Mammary epithelial cell (primary cell): ENCODE measurements at regions of chr19 and their contacts with region 1.

Region 1: DNA sequence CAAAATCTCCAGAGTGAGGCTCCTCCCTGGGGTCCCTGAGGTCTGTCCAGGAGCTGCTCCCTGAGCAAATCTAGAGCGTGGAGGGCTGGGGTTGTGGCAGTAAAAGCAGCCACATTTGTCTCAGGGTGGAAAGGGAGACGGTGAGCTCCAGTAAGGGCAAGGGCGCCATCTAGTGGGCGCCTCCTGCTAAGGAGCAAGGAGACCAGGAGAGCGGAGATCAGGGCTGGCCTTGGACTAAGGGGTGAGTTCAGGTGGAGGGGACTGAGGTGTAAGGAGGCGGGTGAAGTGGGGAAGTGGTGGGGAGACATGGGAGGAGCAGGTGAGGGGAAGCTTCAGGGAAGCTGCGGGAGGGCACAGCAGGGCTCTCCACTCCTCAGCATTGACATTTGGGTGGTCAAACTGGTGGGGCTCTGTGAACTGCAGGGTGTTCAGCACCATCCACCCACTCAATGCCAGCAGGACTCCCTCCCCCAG is 5.3 kb upstream of the CEACAM21 start:
- DNase-seq: peak; percentile 52
- H3K4me3 ChIP-seq: no peak overlapping the region
- H3K27ac ChIP-seq: no peak overlapping the region
- H3K4me1 ChIP-seq: no peaks in the 10 kb centered on the region
- H3K27me3 ChIP-seq: peaks cover 9% of the 10 kb centered on the region
- CTCF ChIP-seq: peak; percentile 82 to 94

Region 2: GRCh38 chr19:41439441-41440222 is 131.0 kb before region 1 on chr19 and contains the start of gene DMAC2:
- CTCF ChIA-PET with region 1: interaction called, 4 read pairs
- dilution Hi-C with region 1: no loop called
- in situ Hi-C with region 1: loop called in 1 of 2 experiments (anchors 10 kb)
- intact Hi-C with region 1: no loop called
- DNase-seq: peak; percentile 97
- H3K4me3 ChIP-seq: peak within 1 kb of the TSS; percentile 68 to 82 (median 76)
- H3K27ac ChIP-seq: peak within 1 kb of the TSS; percentile 79
- H3K4me1 ChIP-seq: peaks cover 9% of the 10 kb centered on the region
- H3K27me3 ChIP-seq: no peaks in the 10 kb centered on the region
- CTCF ChIP-seq: peak; percentile 47 to 57
- total RNA-seq, gene DMAC2: 39.2 to 50.6 TPM

Region 3: DNA sequence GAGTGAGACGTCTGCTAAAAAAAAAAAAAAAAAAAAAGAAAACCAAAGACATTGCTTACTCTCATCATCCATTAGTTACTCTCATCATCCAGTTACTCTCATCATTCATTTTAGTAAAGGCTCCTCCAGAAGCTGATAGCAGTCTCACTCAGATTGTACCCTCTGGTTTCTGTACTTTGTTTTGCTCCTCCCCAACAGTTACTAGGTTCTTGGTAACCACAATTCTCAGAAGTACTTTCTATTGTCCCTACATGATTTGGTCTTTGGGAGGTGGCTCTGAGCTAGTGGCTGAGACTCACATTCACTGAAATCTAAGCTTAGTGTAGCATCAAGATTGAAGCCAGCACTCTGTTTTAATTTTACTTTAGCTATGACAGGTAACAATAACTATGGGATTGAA is 113.4 kb before region 1 on chr19:
- CTCF ChIA-PET with region 1: no interaction called
- dilution Hi-C with region 1: no loop called
- in situ Hi-C with region 1: loop called in 1 of 2 experiments (anchors 10 kb)
- intact Hi-C with region 1: no loop called
- DNase-seq: no peak
- H3K4me3 ChIP-seq: no peak overlapping the region
- H3K27ac ChIP-seq: no peak overlapping the region
- H3K4me1 ChIP-seq: no peaks in the 10 kb centered on the region
- H3K27me3 ChIP-seq: no peaks in the 10 kb centered on the region
- CTCF ChIP-seq: no peak

Region 4: DNA sequence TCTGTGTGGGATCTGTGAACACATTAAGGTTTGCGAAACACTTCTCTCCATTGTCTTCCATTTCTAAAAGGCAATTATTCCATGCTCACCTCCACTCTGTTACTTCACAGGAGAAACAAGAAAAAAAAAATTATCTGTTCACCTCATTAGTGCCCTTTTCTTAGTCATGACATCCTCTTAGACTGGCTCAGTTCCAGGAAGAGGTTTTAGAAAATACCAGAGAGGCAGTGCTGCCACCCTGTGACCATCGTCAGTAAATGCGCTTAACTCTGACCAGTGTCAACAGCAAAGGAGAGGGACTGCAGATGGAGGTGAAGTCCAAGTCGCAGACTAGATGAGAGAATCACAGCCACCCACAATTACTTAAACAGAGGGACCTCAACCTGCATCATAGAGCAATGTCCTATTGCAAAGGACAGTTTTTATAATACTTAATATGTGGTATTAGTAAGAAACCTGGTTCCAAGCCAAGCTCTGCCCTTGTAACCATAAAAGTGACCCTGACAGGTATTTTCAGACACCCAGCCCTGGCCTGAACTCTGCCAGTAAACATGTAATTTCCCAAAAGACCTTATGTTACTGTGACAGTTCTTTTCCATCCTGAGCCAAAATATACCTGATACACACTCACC is 24.7 kb after region 1 on chr19:
- CTCF ChIA-PET with region 1: no interaction called
- dilution Hi-C with region 1: no loop called
- in situ Hi-C with region 1: no loop called
- intact Hi-C with region 1: loop called (anchors 2 kb)
- DNase-seq: peak; percentile 72
- H3K4me3 ChIP-seq: no peak overlapping the region
- H3K27ac ChIP-seq: no peak overlapping the region
- H3K4me1 ChIP-seq: no peaks in the 10 kb centered on the region
- H3K27me3 ChIP-seq: no peaks in the 10 kb centered on the region
- CTCF ChIP-seq: peak; percentile 72 to 77